ENCODE measurements at regions of chr1 and their contacts with region 1.

Region 1: DNA sequence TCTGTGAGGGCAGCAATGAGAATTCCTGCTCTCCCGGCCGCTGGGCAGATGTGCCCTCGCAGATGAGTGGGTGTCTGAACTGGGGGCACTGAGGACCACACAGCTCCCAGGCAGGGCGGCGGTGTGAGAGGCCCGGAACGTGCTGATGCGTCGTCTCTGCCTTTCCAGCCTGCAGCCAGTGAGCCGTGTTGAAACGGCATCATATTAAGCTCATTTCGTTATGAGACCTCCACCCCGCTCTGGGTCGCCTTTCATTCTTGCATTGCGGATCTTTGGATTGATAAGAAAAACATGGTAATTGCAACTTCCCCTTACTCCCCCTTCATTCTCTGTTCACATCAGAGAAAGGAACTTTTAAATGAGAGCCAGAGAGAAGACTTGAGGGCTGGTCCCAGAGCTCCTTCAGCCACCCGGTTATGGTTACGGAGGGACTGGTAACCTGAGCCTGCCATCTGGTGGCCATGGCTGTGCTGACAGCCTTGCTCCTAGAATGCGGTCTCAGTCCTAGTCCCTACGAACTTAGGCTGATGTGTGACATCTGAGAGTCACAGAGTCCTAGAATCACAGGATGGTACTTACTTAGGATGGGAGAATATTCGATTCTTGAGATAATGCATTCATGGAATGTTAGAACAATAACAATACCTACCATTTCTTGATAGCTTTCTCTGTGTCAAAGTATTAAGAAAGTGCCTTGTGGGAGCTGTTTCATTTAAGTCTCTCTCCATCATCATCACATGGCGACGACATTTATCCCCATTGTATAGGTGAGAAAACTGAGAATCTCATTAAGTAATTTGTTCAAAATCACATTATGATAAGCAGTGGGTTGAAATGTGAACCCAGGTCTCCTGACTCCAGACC is 271.0 kb downstream of the TRABD2B start:
- DNase-seq: peak; percentile 71
- H3K4me3 ChIP-seq: no peak overlapping the region
- H3K27ac ChIP-seq: no peak overlapping the region
- H3K4me1 ChIP-seq: no peaks in the 10 kb centered on the region
- H3K27me3 ChIP-seq: peaks cover 11% of the 10 kb centered on the region
- CTCF ChIP-seq: peak; percentile 70 to 90 (median 77)
- POLR2A ChIP-seq: no peak

Region 2: GRCh38 chr1:47333922-47334764 is 392.1 kb before region 1 on chr1:
- intact Hi-C with region 1: loop called (anchors 10 kb)
- DNase-seq: peak; percentile 78
- H3K4me3 ChIP-seq: peak overlapping the region; percentile 87 to 98
- H3K27ac ChIP-seq: peak overlapping the region; percentile 96 to 97
- H3K4me1 ChIP-seq: no peaks in the 10 kb centered on the region
- H3K27me3 ChIP-seq: no peaks in the 10 kb centered on the region
- CTCF ChIP-seq: peak in 3 of 4 experiments; percentile 31 to 56 (median 48)
- POLR2A ChIP-seq: peak; percentile 15

Region 3: GRCh38 chr1:47432071-47433036 is 293.9 kb before region 1 on chr1:
- intact Hi-C with region 1: loop called (anchors 5 kb)
- DNase-seq: peak; percentile 86
- H3K4me3 ChIP-seq: peak overlapping the region in 1 of 2 donors; percentile 9
- H3K27ac ChIP-seq: no peak overlapping the region
- H3K4me1 ChIP-seq: no peaks in the 10 kb centered on the region
- H3K27me3 ChIP-seq: peaks cover 23% of the 10 kb centered on the region
- CTCF ChIP-seq: peak; percentile 57 to 87 (median 82)
- POLR2A ChIP-seq: no peak